B cell (primary cell): ENCODE measurements at regions of chr6 and their contacts with region 1.

Region 1: GRCh38 chr6:7140631-7141378 is 33.0 kb downstream of the RREB1 start:
- DNase-seq: peak; percentile 84
- ATAC-seq: peak; percentile 84
- H3K4me3 ChIP-seq: peak overlapping the region; percentile 62 to 73 (median 69)
- H3K4me3 Mint-ChIP-seq: peak overlapping the region; percentile 87
- H3K27ac ChIP-seq: peak overlapping the region; percentile 74 to 79
- H3K27ac Mint-ChIP-seq: peak overlapping the region; percentile 90
- H3K4me1 ChIP-seq: peaks cover 53 to 66% of the 10 kb centered on the region in 2 donors
- H3K4me1 Mint-ChIP-seq: peaks cover 74% of the 10 kb centered on the region
- H3K27me3 ChIP-seq: no peaks in the 10 kb centered on the region
- H3K27me3 Mint-ChIP-seq: no peaks in the 10 kb centered on the region
- CTCF ChIP-seq: no peak

Region 2: GRCh38 chr6:7086488-7086887 is 54.3 kb before region 1 on chr6:
- CTCF ChIA-PET with region 1: no interaction called
- POLR2A ChIA-PET with region 1: no interaction called
- intact Hi-C with region 1: no loop called
- DNase-seq: peak; percentile 74
- ATAC-seq: peak; percentile 79
- H3K4me3 ChIP-seq: peak overlapping the region; percentile 30 to 89 (median 47)
- H3K4me3 Mint-ChIP-seq: peak overlapping the region; percentile 86
- H3K27ac ChIP-seq: peak overlapping the region; percentile 50 to 73
- H3K27ac Mint-ChIP-seq: peak overlapping the region; percentile 88
- H3K4me1 ChIP-seq: peaks cover 23 to 24% of the 10 kb centered on the region in 2 donors
- H3K4me1 Mint-ChIP-seq: peaks cover 27% of the 10 kb centered on the region
- H3K27me3 ChIP-seq: no peaks in the 10 kb centered on the region
- H3K27me3 Mint-ChIP-seq: no peaks in the 10 kb centered on the region
- CTCF ChIP-seq: no peak

Region 3: GRCh38 chr6:7112741-7113313 is 28.0 kb before region 1 on chr6:
- CTCF ChIA-PET with region 1: no interaction called
- POLR2A ChIA-PET with region 1: interaction called, 4 read pairs
- intact Hi-C with region 1: loop called (anchors 1 kb)
- DNase-seq: peak; percentile 87
- ATAC-seq: peak; percentile 67
- H3K4me3 ChIP-seq: peak overlapping the region in 4 of 5 experiments; percentile 15 to 48 (median 26)
- H3K4me3 Mint-ChIP-seq: peak overlapping the region; percentile 86
- H3K27ac ChIP-seq: peak overlapping the region; percentile 59 to 70
- H3K27ac Mint-ChIP-seq: peak overlapping the region; percentile 91
- H3K4me1 ChIP-seq: peaks cover 43 to 55% of the 10 kb centered on the region in 2 donors
- H3K4me1 Mint-ChIP-seq: peaks cover 75% of the 10 kb centered on the region
- H3K27me3 ChIP-seq: no peaks in the 10 kb centered on the region
- H3K27me3 Mint-ChIP-seq: no peaks in the 10 kb centered on the region
- CTCF ChIP-seq: no peak

Region 4: GRCh38 chr6:7129784-7130569 is 10.8 kb before region 1 on chr6:
- CTCF ChIA-PET with region 1: no interaction called
- POLR2A ChIA-PET with region 1: no interaction called
- intact Hi-C with region 1: no loop called
- DNase-seq: no peak
- ATAC-seq: no peak
- H3K4me3 ChIP-seq: no peak overlapping the region
- H3K4me3 Mint-ChIP-seq: peak overlapping the region; percentile 9
- H3K27ac ChIP-seq: no peak overlapping the region
- H3K27ac Mint-ChIP-seq: peak overlapping the region; percentile 75
- H3K4me1 ChIP-seq: peaks cover 40 to 45% of the 10 kb centered on the region in 2 donors
- H3K4me1 Mint-ChIP-seq: peaks cover 74% of the 10 kb centered on the region
- H3K27me3 ChIP-seq: no peaks in the 10 kb centered on the region
- H3K27me3 Mint-ChIP-seq: no peaks in the 10 kb centered on the region
- CTCF ChIP-seq: no peak